Activated CD4-positive, alpha-beta T cell treated with anti-CD3 and anti-CD28 coated beads for 36 hours (primary cell): ENCODE measurements at regions of chr10 and their contacts with region 1.

Region 1: DNA sequence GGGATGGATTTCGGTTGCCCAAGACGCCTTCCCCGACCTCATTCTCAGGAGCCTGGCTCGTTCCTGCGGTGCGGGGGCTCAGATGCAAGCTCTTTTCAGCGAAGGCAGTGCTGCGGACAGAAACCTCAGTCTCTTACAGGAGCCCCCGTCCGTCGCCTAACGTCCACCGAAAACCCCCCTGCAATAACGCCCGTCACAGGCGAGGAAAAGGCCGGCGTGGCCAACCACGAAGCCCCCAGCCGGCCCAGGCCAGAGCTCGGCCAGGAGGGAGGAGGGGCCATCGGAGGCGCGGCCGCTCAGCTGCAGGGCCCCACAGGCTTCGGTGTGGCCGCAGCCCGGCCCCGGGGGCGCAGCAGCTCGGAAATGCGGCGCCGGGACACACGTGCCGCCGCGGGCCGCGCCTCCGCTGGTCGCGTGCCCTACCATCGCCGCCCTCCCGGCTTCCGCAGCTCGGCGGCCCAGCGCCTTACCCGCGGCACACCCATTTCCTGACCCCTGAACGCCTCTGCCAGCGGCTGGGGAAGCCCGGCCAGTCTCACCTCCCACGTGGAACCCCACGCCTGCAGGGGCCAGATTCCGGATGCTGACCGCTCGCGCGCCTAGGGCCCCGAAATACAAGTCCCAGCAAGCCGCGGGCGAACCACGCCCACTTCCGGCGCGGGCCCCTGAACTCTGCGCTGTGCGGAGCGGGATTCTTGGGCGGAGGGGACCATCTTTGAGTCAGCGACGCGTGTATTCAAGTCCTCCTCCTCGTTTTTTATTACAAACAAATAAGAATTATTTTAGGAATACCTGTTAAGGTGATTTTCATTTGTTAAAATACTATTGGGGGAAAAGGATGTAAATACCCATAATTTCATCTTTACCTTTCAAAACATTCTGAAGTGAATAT is at the start of gene ZNF239:
- DNase-seq: peak; percentile 90
- ATAC-seq: peak; percentile 92
- H3K4me3 Mint-ChIP-seq: peak within 1 kb of the TSS; percentile 70
- H3K27ac Mint-ChIP-seq: peak within 1 kb of the TSS; percentile 82
- H3K4me1 Mint-ChIP-seq: peaks cover 51% of the 10 kb centered on the region
- H3K27me3 Mint-ChIP-seq: no peaks in the 10 kb centered on the region
- total RNA-seq, gene ZNF239: 2.4 to 2.7 TPM

Region 2: DNA sequence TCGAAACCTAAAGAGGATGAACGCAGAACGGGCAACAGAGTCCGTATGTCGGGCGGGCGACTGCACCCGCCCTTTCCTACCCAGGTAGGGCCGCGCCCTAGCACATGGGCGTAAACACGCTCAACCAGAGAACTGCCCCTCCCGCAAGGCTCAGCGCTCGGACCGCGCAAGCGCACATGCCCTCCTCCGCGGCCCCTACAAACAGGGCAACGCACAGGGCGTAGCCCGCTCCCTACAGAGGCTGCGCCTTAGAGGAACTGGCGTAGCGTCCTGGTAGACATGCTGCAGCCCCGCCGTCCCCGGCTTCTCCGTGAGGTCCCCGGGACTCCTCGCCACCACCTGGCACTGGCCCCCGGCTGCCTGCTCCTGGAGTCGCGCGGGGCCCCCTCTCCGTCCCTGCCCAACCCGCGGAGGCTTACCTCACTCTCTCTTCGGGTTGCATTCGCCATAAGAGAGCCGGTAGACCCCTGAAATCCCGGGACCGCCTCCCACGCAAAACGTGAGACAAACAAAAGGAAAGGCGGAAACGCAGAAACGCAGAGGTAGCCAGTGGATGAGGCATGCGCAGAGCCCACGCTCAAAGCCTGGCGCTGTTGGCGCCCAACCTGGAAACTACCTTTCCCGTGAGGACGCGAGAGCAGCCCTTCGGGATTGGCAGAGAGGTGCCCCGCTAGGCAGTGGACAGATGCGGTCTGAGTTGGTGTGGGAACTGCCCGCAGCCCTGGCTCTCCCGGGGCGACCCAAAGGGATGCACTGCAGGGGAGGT is 936.0 kb before region 1 on chr10 and contains the start of gene ZNF33B:
- CTCF ChIA-PET with region 1: no interaction called
- POLR2A ChIA-PET with region 1: no interaction called
- intact Hi-C with region 1: loop called in 1 of 2 experiments (anchors 5 kb)
- DNase-seq: peak; percentile 97
- ATAC-seq: peak; percentile 95
- H3K4me3 Mint-ChIP-seq: peak within 1 kb of the TSS; percentile 88
- H3K27ac Mint-ChIP-seq: peak within 1 kb of the TSS; percentile 97
- H3K4me1 Mint-ChIP-seq: peaks cover 25% of the 10 kb centered on the region
- H3K27me3 Mint-ChIP-seq: no peaks in the 10 kb centered on the region
- total RNA-seq, gene ZNF33B: 7.4 to 10.5 TPM

Region 3: GRCh38 chr10:43396928-43397624 is 177.2 kb before region 1 on chr10:
- CTCF ChIA-PET with region 1: no interaction called
- POLR2A ChIA-PET with region 1: no interaction called
- intact Hi-C with region 1: loop called in 1 of 2 experiments (anchors 10 kb)
- DNase-seq: peak; percentile 93
- ATAC-seq: peak; percentile 72
- H3K4me3 Mint-ChIP-seq: peak overlapping the region; percentile 99
- H3K27ac Mint-ChIP-seq: peak overlapping the region; percentile 96
- H3K4me1 Mint-ChIP-seq: peaks cover 63% of the 10 kb centered on the region
- H3K27me3 Mint-ChIP-seq: no peaks in the 10 kb centered on the region

Region 4: DNA sequence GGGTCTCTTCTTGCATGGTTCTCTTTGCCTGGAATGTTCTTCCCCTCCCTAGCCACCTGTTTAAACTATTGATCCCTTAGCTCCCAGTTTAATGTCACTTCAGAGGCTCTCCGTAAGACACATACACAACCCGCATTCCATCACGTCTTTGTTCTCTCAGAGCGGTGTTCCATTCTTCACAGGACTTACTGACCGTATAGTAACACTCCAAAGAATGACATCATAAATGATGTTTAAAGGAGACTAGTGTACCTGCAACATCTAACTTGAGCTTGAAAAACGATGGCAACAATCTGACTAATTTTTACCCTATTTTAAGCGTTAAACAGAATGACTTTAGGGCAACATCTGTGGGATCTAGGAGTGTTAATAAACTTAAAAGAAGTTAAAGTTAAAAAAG is 10.2 kb before region 1 on chr10:
- CTCF ChIA-PET with region 1: no interaction called
- POLR2A ChIA-PET with region 1: no interaction called
- intact Hi-C with region 1: no loop called
- DNase-seq: no peak
- ATAC-seq: no peak
- H3K4me3 Mint-ChIP-seq: no peak overlapping the region
- H3K27ac Mint-ChIP-seq: no peak overlapping the region
- H3K4me1 Mint-ChIP-seq: no peaks in the 10 kb centered on the region
- H3K27me3 Mint-ChIP-seq: no peaks in the 10 kb centered on the region

Region 5: GRCh38 chr10:43594944-43595589 is 20.8 kb after region 1 on chr10:
- CTCF ChIA-PET with region 1: no interaction called
- POLR2A ChIA-PET with region 1: no interaction called
- intact Hi-C with region 1: loop called in 1 of 2 experiments (anchors 1 kb)
- DNase-seq: peak; percentile 69
- ATAC-seq: peak; percentile 80
- H3K4me3 Mint-ChIP-seq: peak overlapping the region; percentile 42
- H3K27ac Mint-ChIP-seq: peak overlapping the region; percentile 76
- H3K4me1 Mint-ChIP-seq: peaks cover 26% of the 10 kb centered on the region
- H3K27me3 Mint-ChIP-seq: peaks cover 5% of the 10 kb centered on the region

Region 6: DNA sequence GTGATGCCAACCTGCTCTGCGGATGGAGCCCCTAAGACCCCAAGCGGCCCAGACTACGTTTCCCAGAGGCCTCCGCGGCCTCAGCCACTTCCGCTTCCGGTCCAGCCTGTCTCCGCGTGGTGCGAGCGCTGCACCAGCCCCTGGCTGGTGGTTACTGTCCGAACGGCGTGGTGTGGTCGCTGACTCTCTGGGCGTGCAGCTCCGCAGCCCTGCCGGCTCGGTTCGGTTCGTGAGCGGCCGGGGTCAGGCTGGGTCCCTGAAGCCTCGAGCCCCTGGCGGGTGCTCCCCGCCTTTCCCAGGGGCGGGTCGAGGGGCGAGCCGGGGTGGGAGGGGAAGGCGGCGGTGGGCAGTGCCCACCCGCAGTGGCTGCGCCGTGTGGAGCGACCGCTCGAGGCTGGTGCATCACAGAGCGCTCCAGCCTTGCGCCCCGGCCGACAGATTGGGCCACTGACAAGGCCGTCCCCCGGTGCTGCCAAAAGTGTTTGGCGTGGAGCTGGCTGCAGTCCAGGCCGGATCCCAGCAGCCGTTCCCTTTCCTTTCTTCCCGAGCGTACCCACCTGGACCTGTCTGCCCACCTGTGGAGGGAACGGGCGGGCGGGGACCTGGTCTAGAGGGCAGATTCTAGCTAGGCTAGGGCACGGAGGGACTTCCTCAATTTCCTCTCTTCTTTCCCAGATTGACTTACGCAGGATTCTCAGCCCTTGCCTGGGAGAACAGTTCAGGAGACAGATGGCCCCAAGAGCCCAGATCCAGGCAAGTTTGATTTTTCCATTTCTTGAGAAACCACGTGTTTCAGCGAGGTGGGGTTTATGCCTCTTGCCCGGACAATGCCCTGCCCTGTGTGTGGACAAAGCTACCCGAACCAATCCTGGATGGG is 32.3 kb after region 1 on chr10 and contains the start of gene ZNF485:
- CTCF ChIA-PET with region 1: interaction called, 3 read pairs
- POLR2A ChIA-PET with region 1: no interaction called
- intact Hi-C with region 1: loop called (anchors 1 to 5 kb)
- DNase-seq: peak; percentile 80
- ATAC-seq: peak; percentile 91
- H3K4me3 Mint-ChIP-seq: peak within 1 kb of the TSS; percentile 81
- H3K27ac Mint-ChIP-seq: peak within 1 kb of the TSS; percentile 82
- H3K4me1 Mint-ChIP-seq: peaks cover 40% of the 10 kb centered on the region
- H3K27me3 Mint-ChIP-seq: no peaks in the 10 kb centered on the region
- total RNA-seq, gene ZNF485: 6.9 to 7.6 TPM

Region 7: GRCh38 chr10:43648398-43649184 is 74.3 kb after region 1 on chr10 and contains the start of gene ZNF32:
- CTCF ChIA-PET with region 1: interaction called, 8 read pairs
- POLR2A ChIA-PET with region 1: no interaction called
- intact Hi-C with region 1: loop called (anchors 1 to 5 kb)
- DNase-seq: peak; percentile 91
- ATAC-seq: peak; percentile 97
- H3K4me3 Mint-ChIP-seq: peak within 1 kb of the TSS; percentile 79
- H3K27ac Mint-ChIP-seq: peak within 1 kb of the TSS; percentile 88
- H3K4me1 Mint-ChIP-seq: peaks cover 14% of the 10 kb centered on the region
- H3K27me3 Mint-ChIP-seq: peaks cover 3% of the 10 kb centered on the region
- total RNA-seq, gene ZNF32: 14.1 to 15.2 TPM

Region 8: DNA sequence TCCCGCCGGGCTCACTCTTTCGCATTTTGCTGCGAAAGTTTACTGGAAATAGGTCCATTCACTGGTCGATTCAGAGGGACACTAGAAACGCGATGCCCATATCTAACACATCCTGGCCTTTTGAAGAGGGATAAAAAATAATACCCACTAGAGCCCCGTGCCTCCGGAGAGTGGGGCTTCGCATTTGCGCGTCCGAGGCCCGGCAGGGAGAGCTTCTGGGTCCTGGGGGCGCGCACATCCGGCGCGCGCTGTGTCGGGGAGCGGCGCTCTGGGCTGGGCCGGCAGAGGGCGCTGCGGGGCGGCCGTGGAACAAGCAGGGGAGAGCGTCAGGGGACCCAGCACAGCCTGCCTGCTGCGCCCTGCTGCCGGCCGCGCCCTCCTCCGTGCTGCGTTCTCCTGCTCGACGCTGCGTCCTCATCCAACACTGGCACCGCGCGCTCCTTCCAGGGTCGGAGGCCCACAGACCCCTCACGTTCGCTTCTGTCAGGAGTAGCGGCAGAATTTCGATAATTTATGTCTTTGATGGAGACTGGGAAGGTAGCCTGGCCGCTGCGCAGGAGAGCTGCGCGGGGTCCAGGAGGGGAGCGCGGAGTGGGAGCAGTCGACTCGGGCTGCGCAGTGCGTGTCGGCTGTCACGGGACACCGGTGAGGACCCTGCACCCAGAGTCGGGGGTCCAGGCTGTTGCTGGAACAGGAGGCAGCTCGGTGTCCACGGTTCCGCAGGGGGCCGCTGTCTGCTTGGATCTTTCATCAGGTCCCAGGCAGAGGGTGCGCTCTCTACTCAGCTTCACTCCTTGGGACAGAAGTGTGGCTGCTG is 115.9 kb after region 1 on chr10:
- CTCF ChIA-PET with region 1: no interaction called
- POLR2A ChIA-PET with region 1: no interaction called
- intact Hi-C with region 1: no loop called
- DNase-seq: peak; percentile 92
- ATAC-seq: peak; percentile 100
- H3K4me3 Mint-ChIP-seq: peak overlapping the region; percentile 71
- H3K27ac Mint-ChIP-seq: peak overlapping the region; percentile 72
- H3K4me1 Mint-ChIP-seq: peaks cover 2% of the 10 kb centered on the region
- H3K27me3 Mint-ChIP-seq: peaks cover 24% of the 10 kb centered on the region